Caco-2 (cell line): ENCODE measurements at regions of chr20 and their contacts with region 1.

Region 1: DNA sequence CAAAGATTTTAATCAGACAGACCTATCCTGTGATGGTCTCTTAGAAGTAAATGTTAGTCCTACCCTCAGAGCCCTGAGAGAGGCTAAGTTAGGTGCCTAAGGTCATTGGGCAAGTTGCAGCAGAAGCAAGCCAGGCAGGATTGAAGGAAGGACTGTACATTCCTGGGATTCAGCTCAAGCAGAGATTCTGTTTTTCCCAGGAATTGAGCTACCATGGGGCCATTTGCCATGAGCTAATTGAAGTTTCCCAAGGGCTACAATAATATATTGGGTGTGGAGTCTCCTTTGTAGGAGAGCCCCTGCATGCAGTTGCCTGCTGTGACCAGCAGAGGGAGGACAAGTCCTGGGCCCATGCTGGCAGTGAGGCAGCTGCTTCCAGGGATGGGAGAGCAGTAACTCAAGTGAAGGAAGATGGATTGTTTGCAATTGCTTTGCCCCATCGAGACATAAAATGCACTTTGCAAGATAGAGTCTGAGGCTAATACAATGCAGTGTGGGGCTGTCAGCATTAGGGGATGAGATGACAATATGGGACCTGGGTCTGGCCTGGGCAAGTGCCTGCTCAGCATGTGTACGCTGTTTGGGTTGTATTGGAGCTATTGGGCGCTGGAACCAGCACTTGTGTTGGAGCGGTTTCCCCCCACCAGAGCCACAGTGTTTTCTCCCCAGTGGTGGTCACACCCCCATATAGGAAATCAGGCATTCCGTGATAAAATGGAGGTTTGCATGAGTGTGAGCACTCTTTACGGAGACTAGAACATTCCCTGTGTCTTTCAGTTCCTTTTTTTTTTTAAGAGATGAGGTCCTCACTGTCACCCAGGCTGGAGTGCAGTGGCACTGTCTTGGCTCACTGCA is 27.9 kb downstream of the DNMT3B start:
- DNase-seq: peak; percentile 88 to 91
- H3K4me3 ChIP-seq: no peak overlapping the region
- H3K4me3 Mint-ChIP-seq: no peak overlapping the region
- H3K27ac Mint-ChIP-seq: no peak overlapping the region
- H3K4me1 ChIP-seq: peaks cover 13% of the 10 kb centered on the region; the same call in 1 of the 2 replicates
- H3K4me1 Mint-ChIP-seq: no peaks in the 10 kb centered on the region
- H3K27me3 ChIP-seq: no peaks in the 10 kb centered on the region
- H3K27me3 Mint-ChIP-seq: no peaks in the 10 kb centered on the region
- CTCF ChIP-seq: peak; percentile 100

Region 2: DNA sequence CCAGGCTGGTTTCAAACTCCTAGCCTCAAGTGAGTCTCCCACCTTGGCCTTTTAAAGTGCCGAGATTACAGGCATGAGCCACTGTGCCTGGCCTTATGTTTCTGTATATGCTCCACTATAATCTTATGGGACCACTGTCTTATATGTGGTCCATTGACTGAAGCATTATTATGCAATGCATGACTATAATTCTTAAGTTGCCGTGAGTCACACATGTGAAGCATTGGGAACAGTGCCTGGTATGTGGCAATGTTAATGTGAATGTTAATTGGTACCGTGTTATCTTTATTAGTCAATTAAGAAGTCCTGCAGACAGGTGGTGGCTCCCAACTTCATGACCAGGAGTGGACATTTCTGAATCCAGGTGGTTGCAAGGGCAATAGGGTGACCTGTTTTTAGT is 446.7 kb before region 1 on chr20:
- CTCF ChIA-PET with region 1: no interaction called
- POLR2A ChIA-PET with region 1: no interaction called
- intact Hi-C with region 1: no loop called
- DNase-seq: peak in 1 of 2 experiments; percentile 25
- H3K4me3 ChIP-seq: no peak overlapping the region
- H3K4me3 Mint-ChIP-seq: no peak overlapping the region
- H3K27ac Mint-ChIP-seq: no peak overlapping the region
- H3K4me1 ChIP-seq: peaks cover 24% of the 10 kb centered on the region
- H3K4me1 Mint-ChIP-seq: peaks cover 31% of the 10 kb centered on the region
- H3K27me3 ChIP-seq: no peaks in the 10 kb centered on the region
- H3K27me3 Mint-ChIP-seq: no peaks in the 10 kb centered on the region
- CTCF ChIP-seq: no peak

Region 3: DNA sequence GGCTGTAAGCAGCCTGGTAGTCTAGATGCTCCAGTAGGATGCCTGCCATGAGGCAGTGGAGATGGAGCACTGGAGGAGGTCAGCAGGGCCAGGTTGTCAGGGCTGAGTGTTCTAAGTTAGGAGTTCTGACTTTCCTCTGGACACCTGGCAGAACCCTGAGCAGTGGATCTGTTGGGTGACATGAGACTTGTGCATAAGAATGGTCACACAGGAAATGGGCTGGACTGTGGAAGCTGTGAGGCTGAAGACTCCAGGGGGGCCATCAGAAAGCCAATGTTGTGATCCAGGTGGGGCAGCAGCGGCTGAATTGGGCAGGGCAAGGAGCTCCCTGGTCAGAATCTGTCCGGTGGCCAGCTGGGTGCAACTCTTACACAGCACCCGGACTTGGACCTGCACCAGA is 92.5 kb before region 1 on chr20:
- CTCF ChIA-PET with region 1: interaction called, 17 read pairs
- POLR2A ChIA-PET with region 1: no interaction called
- intact Hi-C with region 1: no loop called
- DNase-seq: no peak
- H3K4me3 ChIP-seq: no peak overlapping the region
- H3K4me3 Mint-ChIP-seq: no peak overlapping the region
- H3K27ac Mint-ChIP-seq: peak overlapping the region; percentile 43
- H3K4me1 ChIP-seq: peaks cover 19% of the 10 kb centered on the region
- H3K4me1 Mint-ChIP-seq: peaks cover 31% of the 10 kb centered on the region
- H3K27me3 ChIP-seq: no peaks in the 10 kb centered on the region
- H3K27me3 Mint-ChIP-seq: no peaks in the 10 kb centered on the region
- CTCF ChIP-seq: no peak

Region 4: GRCh38 chr20:32762149-32762753 is 27.9 kb before region 1 on chr20 and contains the start of gene DNMT3B:
- CTCF ChIA-PET with region 1: interaction called, 10 read pairs
- POLR2A ChIA-PET with region 1: no interaction called
- intact Hi-C with region 1: no loop called
- DNase-seq: peak; percentile 97 to 99
- H3K4me3 ChIP-seq: peak within 1 kb of the TSS; percentile 87
- H3K4me3 Mint-ChIP-seq: peak within 1 kb of the TSS; percentile 100
- H3K27ac Mint-ChIP-seq: peak within 1 kb of the TSS; percentile 93
- H3K4me1 ChIP-seq: peaks cover 25% of the 10 kb centered on the region
- H3K4me1 Mint-ChIP-seq: peaks cover 33% of the 10 kb centered on the region
- H3K27me3 ChIP-seq: no peaks in the 10 kb centered on the region
- H3K27me3 Mint-ChIP-seq: no peaks in the 10 kb centered on the region
- CTCF ChIP-seq: peak in 1 of 2 experiments; percentile 31
- total RNA-seq, gene DNMT3B: 95.5 and 105 TPM in 2 replicates

Region 5: GRCh38 chr20:32830437-32830836 is 40.3 kb after region 1 on chr20:
- CTCF ChIA-PET with region 1: interaction called, 4 read pairs
- POLR2A ChIA-PET with region 1: no interaction called
- intact Hi-C with region 1: loop called (anchors 5 kb)
- DNase-seq: peak in 1 of 2 experiments; percentile 14
- H3K4me3 ChIP-seq: no peak overlapping the region
- H3K4me3 Mint-ChIP-seq: no peak overlapping the region
- H3K27ac Mint-ChIP-seq: peak overlapping the region; percentile 12
- H3K4me1 ChIP-seq: peaks cover 4% of the 10 kb centered on the region
- H3K4me1 Mint-ChIP-seq: peaks cover 7% of the 10 kb centered on the region
- H3K27me3 ChIP-seq: no peaks in the 10 kb centered on the region
- H3K27me3 Mint-ChIP-seq: no peaks in the 10 kb centered on the region
- CTCF ChIP-seq: no peak

Region 6: GRCh38 chr20:32945710-32946221 is 155.6 kb after region 1 on chr20:
- CTCF ChIA-PET with region 1: interaction called, 10 read pairs
- POLR2A ChIA-PET with region 1: no interaction called
- intact Hi-C with region 1: loop called (anchors 1 kb)
- DNase-seq: peak in 1 of 2 experiments; percentile 68
- H3K4me3 ChIP-seq: no peak overlapping the region
- H3K4me3 Mint-ChIP-seq: no peak overlapping the region
- H3K27ac Mint-ChIP-seq: no peak overlapping the region
- H3K4me1 ChIP-seq: no peaks in the 10 kb centered on the region
- H3K4me1 Mint-ChIP-seq: no peaks in the 10 kb centered on the region
- H3K27me3 ChIP-seq: no peaks in the 10 kb centered on the region; the same call in 1 of the 2 replicates
- H3K27me3 Mint-ChIP-seq: peaks cover 33% of the 10 kb centered on the region
- CTCF ChIP-seq: peak; percentile 91 to 92